Activated CD4-positive, alpha-beta memory T cell treated with anti-CD3 and anti-CD28 coated beads for 36 hours (primary cell): ENCODE measurements at regions of chr5 and their contacts with region 1.

Region 1: GRCh38 chr5:157731272-157732129 is at the start of gene THG1L:
- DNase-seq: peak; percentile 100
- H3K4me3 Mint-ChIP-seq: peak within 1 kb of the TSS; percentile 95
- H3K27ac Mint-ChIP-seq: peak within 1 kb of the TSS; percentile 97
- H3K4me1 Mint-ChIP-seq: peaks cover 33% of the 10 kb centered on the region
- H3K27me3 Mint-ChIP-seq: no peaks in the 10 kb centered on the region
- total RNA-seq, gene THG1L: 28.6 to 33.5 TPM

Region 2: GRCh38 chr5:157142317-157143126 is 589.0 kb before region 1 on chr5 and contains the start of gene MED7:
- CTCF ChIA-PET with region 1: no interaction called
- POLR2A ChIA-PET with region 1: no interaction called
- intact Hi-C with region 1: loop called (anchors 5 kb)
- DNase-seq: peak; percentile 96
- H3K4me3 Mint-ChIP-seq: peak within 1 kb of the TSS; percentile 96
- H3K27ac Mint-ChIP-seq: peak within 1 kb of the TSS; percentile 99
- H3K4me1 Mint-ChIP-seq: peaks cover 49% of the 10 kb centered on the region
- H3K27me3 Mint-ChIP-seq: no peaks in the 10 kb centered on the region
- total RNA-seq, gene MED7: 17.2 to 19.2 TPM

Region 3: GRCh38 chr5:157265714-157266285 is 465.7 kb before region 1 on chr5 and contains the start of gene CYFIP2:
- CTCF ChIA-PET with region 1: no interaction called
- POLR2A ChIA-PET with region 1: no interaction called
- intact Hi-C with region 1: loop called (anchors 5 kb)
- DNase-seq: peak; percentile 91
- H3K4me3 Mint-ChIP-seq: peak within 1 kb of the TSS; percentile 96
- H3K27ac Mint-ChIP-seq: peak within 1 kb of the TSS; percentile 95
- H3K4me1 Mint-ChIP-seq: peaks cover 70% of the 10 kb centered on the region
- H3K27me3 Mint-ChIP-seq: no peaks in the 10 kb centered on the region
- total RNA-seq, gene CYFIP2: 319 to 321 TPM

Region 4: GRCh38 chr5:157670662-157671591 is 60.6 kb before region 1 on chr5 and contains the start of gene C5orf52:
- CTCF ChIA-PET with region 1: interaction called, 5 read pairs
- POLR2A ChIA-PET with region 1: no interaction called
- intact Hi-C with region 1: loop called (anchors 1 kb)
- DNase-seq: peak; percentile 39
- H3K4me3 Mint-ChIP-seq: peak within 1 kb of the TSS; percentile 77
- H3K27ac Mint-ChIP-seq: peak within 1 kb of the TSS; percentile 47
- H3K4me1 Mint-ChIP-seq: peaks cover 20% of the 10 kb centered on the region
- H3K27me3 Mint-ChIP-seq: peaks cover 5% of the 10 kb centered on the region
- total RNA-seq, gene C5orf52: not detected

Region 5: GRCh38 chr5:157681048-157681447 is 50.5 kb before region 1 on chr5:
- CTCF ChIA-PET with region 1: no interaction called
- POLR2A ChIA-PET with region 1: no interaction called
- intact Hi-C with region 1: no loop called
- DNase-seq: no peak
- H3K4me3 Mint-ChIP-seq: no peak overlapping the region
- H3K27ac Mint-ChIP-seq: no peak overlapping the region
- H3K4me1 Mint-ChIP-seq: no peaks in the 10 kb centered on the region
- H3K27me3 Mint-ChIP-seq: no peaks in the 10 kb centered on the region

Region 6: GRCh38 chr5:157710872-157711271 is 20.6 kb before region 1 on chr5:
- CTCF ChIA-PET with region 1: no interaction called
- POLR2A ChIA-PET with region 1: no interaction called
- intact Hi-C with region 1: loop called (anchors 1 kb)
- DNase-seq: no peak
- H3K4me3 Mint-ChIP-seq: no peak overlapping the region
- H3K27ac Mint-ChIP-seq: no peak overlapping the region
- H3K4me1 Mint-ChIP-seq: peaks cover 16% of the 10 kb centered on the region
- H3K27me3 Mint-ChIP-seq: peaks cover 1% of the 10 kb centered on the region